H1 (cell line): ENCODE measurements at regions of chr3 and their contacts with region 1.

Region 1: GRCh38 chr3:115623044-115623868 is at the start of gene GAP43:
- DNase-seq: peak; percentile 55 to 75
- H3K4me3 ChIP-seq: peak within 1 kb of the TSS; percentile 63 to 87 (median 76)
- H3K27ac ChIP-seq: no peak within 1 kb of the TSS
- H3K4me1 ChIP-seq: peaks cover 1 to 15% (median 11%) of the 10 kb centered on the region in 4 experiments; a peak in 6 of 7 replicates
- H3K27me3 ChIP-seq: peaks cover 0 to 6% (median 2%) of the 10 kb centered on the region in 4 experiments; a peak in 2 of 7 replicates
- CTCF ChIP-seq: no peak
- EP300 ChIP-seq: no peak
- POLR2A ChIP-seq: no peak; a peak in 1 of 3 replicates
- RAD21 ChIP-seq: peak; percentile 26 to 27
- total RNA-seq, gene GAP43: 21.9 and 22.6 TPM in 2 replicates

Region 2: GRCh38 chr3:115549071-115549470 is 74.2 kb before region 1 on chr3:
- CTCF ChIA-PET with region 1: no interaction called
- POLR2A ChIA-PET with region 1: no interaction called
- DNase-seq: no peak
- H3K4me3 ChIP-seq: no peak overlapping the region
- H3K27ac ChIP-seq: no peak overlapping the region
- H3K4me1 ChIP-seq: no peaks in the 10 kb centered on the region
- H3K27me3 ChIP-seq: no peaks in the 10 kb centered on the region
- CTCF ChIP-seq: no peak
- EP300 ChIP-seq: no peak
- POLR2A ChIP-seq: no peak
- RAD21 ChIP-seq: no peak

Region 3: GRCh38 chr3:115658337-115659181 is 35.3 kb after region 1 on chr3:
- CTCF ChIA-PET with region 1: interaction called, 6 read pairs
- POLR2A ChIA-PET with region 1: interaction called, 10 read pairs
- DNase-seq: peak; percentile 72 to 77
- H3K4me3 ChIP-seq: peak overlapping the region; percentile 64 to 76 (median 72)
- H3K27ac ChIP-seq: peak overlapping the region; percentile 82
- H3K4me1 ChIP-seq: peaks cover 5 to 14% (median 10%) of the 10 kb centered on the region in 4 experiments; a peak in 6 of 7 replicates
- H3K27me3 ChIP-seq: no peaks in the 10 kb centered on the region
- CTCF ChIP-seq: no peak
- EP300 ChIP-seq: no peak
- POLR2A ChIP-seq: peak; percentile 89 to 90; a peak in 2 of 3 replicates
- RAD21 ChIP-seq: no peak

Region 4: DNA sequence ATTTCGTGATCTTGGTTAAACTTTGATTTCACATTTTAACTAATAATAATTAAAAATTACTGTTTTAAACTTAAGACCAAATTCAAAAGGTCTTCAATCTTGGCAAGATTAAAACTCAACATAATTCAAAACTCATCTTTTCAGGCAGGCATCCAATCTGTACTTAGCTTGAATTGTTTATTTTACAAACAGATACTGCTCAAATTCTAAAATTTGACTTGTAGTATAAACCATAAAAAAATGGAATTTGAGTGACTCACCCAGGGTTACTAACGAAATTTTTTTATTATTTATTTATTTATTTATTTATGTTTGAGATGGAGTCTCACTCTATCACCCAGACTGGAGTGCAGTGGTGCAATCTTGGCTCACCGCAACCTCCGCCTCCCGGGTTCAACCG is 64.5 kb after region 1 on chr3:
- CTCF ChIA-PET with region 1: interaction called, 10 read pairs
- POLR2A ChIA-PET with region 1: no interaction called
- DNase-seq: no peak
- H3K4me3 ChIP-seq: no peak overlapping the region
- H3K27ac ChIP-seq: no peak overlapping the region
- H3K4me1 ChIP-seq: no peaks in the 10 kb centered on the region
- H3K27me3 ChIP-seq: no peaks in the 10 kb centered on the region
- CTCF ChIP-seq: no peak
- EP300 ChIP-seq: no peak
- POLR2A ChIP-seq: no peak
- RAD21 ChIP-seq: no peak

Region 5: DNA sequence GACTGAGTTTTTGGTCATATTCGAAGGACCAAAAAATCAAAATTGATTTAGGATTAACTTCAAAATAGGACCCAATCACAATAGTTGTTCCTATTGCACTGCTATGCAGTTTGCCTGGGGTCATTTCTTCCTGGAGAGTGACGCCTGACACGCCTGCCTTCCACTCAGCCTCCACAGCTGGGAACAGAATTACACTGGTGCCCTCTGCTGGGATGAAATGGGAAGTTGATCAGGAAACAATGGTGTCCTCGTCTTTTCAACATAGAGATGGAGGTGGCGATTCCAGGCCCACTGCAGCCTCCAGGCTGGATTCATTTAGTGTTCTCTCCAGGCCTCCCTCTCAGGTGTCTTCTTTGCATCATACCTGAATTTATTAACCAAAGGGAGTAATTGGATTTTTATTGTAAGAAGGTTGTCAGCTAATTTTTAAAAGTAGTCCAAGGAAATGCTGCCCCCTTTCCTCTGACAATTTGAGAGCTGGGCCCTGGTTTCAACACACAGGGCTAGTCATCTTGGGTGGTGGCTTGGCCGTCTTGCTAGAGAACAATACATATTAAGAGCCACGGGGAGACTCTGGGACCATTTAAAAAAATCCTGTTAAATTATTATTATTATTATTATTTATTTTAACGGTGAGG is 69.8 kb after region 1 on chr3:
- CTCF ChIA-PET with region 1: interaction called, 10 read pairs
- POLR2A ChIA-PET with region 1: no interaction called
- DNase-seq: peak; percentile 41 to 84
- H3K4me3 ChIP-seq: no peak overlapping the region
- H3K27ac ChIP-seq: no peak overlapping the region
- H3K4me1 ChIP-seq: no peaks in the 10 kb centered on the region
- H3K27me3 ChIP-seq: no peaks in the 10 kb centered on the region
- CTCF ChIP-seq: peak; percentile 61 to 89 (median 83)
- EP300 ChIP-seq: no peak
- POLR2A ChIP-seq: no peak
- RAD21 ChIP-seq: peak; percentile 99

Region 6: DNA sequence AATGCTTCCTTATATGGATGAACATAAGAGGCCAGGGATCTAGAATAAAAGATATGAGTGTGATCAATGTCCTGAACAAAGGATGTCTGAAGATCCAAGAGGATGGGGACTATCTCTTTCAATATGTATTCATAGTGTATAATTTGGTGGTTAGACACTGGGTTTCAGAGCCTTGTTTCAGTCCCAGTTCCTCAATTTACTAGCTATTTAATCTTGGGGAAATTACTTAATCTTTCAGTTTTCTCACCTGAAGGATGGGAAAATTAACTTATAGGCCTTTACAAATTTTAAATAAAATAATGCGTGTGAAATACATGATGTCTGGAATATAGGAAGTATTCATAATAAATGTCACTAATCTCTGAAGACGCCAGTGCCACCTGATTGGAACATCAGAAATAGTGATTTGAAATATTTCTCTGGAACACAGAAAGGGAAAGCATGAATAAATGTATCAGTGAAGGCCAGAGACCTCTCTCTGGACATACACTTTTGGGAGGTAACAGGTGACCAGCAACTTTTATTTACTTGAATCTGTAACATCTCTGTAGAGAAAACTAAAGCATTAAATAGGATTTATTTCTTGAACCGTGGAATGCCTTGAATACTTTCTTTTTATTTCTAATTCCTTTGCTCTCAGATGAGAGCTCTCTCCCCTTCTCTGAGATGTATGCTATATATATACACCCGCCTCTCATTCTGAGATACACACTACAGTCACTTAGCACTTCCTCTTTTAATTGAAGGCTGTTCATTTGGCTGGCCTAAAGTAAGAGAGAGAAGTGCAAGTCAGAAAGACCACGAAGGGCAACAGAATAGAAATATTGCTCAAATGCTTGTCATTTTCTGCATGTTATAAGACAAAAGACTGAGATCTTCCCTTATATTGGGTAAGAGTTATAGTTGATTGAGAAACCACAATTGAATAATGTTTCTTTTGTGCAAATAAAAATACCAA is 415.0 kb after region 1 on chr3:
- CTCF ChIA-PET with region 1: no interaction called
- POLR2A ChIA-PET with region 1: no interaction called
- DNase-seq: no peak
- H3K4me3 ChIP-seq: no peak overlapping the region
- H3K27ac ChIP-seq: no peak overlapping the region
- H3K4me1 ChIP-seq: peaks cover 0 to 7% (median 1%) of the 10 kb centered on the region in 4 experiments; a peak in 1 of 7 replicates
- H3K27me3 ChIP-seq: no peaks in the 10 kb centered on the region
- CTCF ChIP-seq: no peak
- EP300 ChIP-seq: no peak
- POLR2A ChIP-seq: no peak
- RAD21 ChIP-seq: no peak